ENCODE measurements at regions of chr1 and their contacts with region 1.

Region 1: GRCh38 chr1:9559673-9560072 is 20.4 kb downstream of the SLC25A33 start:
- DNase-seq: no peak
- ATAC-seq: no peak
- H3K4me3 Mint-ChIP-seq: peak overlapping the region; percentile 68
- H3K27ac Mint-ChIP-seq: peak overlapping the region; percentile 41
- H3K4me1 Mint-ChIP-seq: peaks cover 19% of the 10 kb centered on the region
- H3K27me3 Mint-ChIP-seq: no peaks in the 10 kb centered on the region
- CTCF ChIP-seq: no peak

Region 2: GRCh38 chr1:9428601-9429341 is 130.9 kb before region 1 on chr1:
- CTCF ChIA-PET with region 1: no interaction called
- POLR2A ChIA-PET with region 1: no interaction called
- intact Hi-C with region 1: no loop called
- DNase-seq: peak; percentile 100
- ATAC-seq: peak; percentile 78
- H3K4me3 Mint-ChIP-seq: peak overlapping the region; percentile 95
- H3K27ac Mint-ChIP-seq: peak overlapping the region; percentile 97
- H3K4me1 Mint-ChIP-seq: peaks cover 59% of the 10 kb centered on the region
- H3K27me3 Mint-ChIP-seq: no peaks in the 10 kb centered on the region
- CTCF ChIP-seq: no peak

Region 3: GRCh38 chr1:9486466-9487140 is 73.1 kb before region 1 on chr1:
- CTCF ChIA-PET with region 1: no interaction called
- POLR2A ChIA-PET with region 1: no interaction called
- intact Hi-C with region 1: no loop called
- DNase-seq: no peak
- ATAC-seq: no peak
- H3K4me3 Mint-ChIP-seq: no peak overlapping the region
- H3K27ac Mint-ChIP-seq: no peak overlapping the region
- H3K4me1 Mint-ChIP-seq: peaks cover 4% of the 10 kb centered on the region
- H3K27me3 Mint-ChIP-seq: peaks cover 17% of the 10 kb centered on the region
- CTCF ChIP-seq: no peak

Region 4: GRCh38 chr1:10074059-10074851 is 514.6 kb after region 1 on chr1:
- CTCF ChIA-PET with region 1: no interaction called
- POLR2A ChIA-PET with region 1: interaction called, 21 read pairs
- intact Hi-C with region 1: no loop called
- DNase-seq: no peak
- ATAC-seq: no peak
- H3K4me3 Mint-ChIP-seq: no peak overlapping the region
- H3K27ac Mint-ChIP-seq: no peak overlapping the region
- H3K4me1 Mint-ChIP-seq: peaks cover 9% of the 10 kb centered on the region
- H3K27me3 Mint-ChIP-seq: no peaks in the 10 kb centered on the region
- CTCF ChIP-seq: no peak